CD4-positive, alpha-beta memory T cell (primary cell): ENCODE measurements at regions of chr1 and their contacts with region 1.

Region 1: GRCh38 chr1:26417111-26417759 is 6.6 kb downstream of the LIN28A start:
- DNase-seq: peak; percentile 76 to 81 (median 78)
- H3K4me3 ChIP-seq: no peak overlapping the region
- H3K4me3 Mint-ChIP-seq: no peak overlapping the region
- H3K27ac ChIP-seq: no peak overlapping the region
- H3K27ac Mint-ChIP-seq: no peak overlapping the region
- H3K4me1 ChIP-seq: no peaks in the 10 kb centered on the region
- H3K4me1 Mint-ChIP-seq: peaks cover 0 to 3% (median 0%) of the 10 kb centered on the region in 4 donors
- H3K27me3 ChIP-seq: peaks cover 19% of the 10 kb centered on the region
- H3K27me3 Mint-ChIP-seq: peaks cover 12 to 23% of the 10 kb centered on the region in 2 donors

Region 2: DNA sequence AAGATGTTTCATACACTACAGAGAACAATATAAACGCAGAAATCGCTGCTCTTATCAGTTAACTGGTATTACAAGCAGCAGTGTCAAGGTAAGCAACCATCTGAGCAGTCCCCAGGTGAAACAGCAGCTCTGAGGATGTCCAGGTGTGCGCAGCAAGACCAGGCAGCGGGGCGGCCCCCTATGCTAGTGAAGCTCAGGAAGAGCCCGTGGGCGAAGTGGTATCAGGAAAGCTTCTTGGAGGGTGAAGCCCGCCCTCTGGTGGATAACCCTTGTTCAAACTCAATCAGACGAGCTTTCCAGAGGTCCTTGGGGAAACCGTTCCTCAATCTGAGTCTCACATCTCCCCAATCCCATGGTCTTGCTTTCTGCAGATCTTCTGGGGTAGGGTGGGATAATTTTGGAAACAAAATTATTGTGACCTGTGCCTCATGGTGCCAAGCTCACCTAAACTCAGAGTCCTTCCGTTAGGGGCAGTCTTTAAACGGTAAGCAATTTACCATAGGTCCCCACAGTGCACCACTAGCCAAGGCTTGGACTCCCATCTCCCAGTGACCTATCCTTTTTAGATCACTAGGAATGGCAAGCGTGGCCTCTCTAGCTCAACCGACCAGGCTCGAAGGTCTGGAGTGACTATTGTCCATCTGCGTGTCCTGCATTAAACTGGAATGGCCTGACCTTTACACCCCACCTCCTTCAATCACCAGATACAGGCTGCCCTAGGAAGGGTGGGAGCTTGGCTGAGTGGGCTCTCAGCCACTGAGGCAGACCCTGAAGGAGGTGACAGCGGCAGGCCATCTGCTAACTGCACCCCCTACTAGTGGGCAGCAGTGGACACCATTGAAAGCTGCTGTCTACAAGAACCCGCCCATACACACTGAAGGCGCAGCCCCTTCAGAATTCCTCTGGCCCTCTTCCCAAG is 271.9 kb before region 1 on chr1:
- CTCF ChIA-PET with region 1: interaction called, 11 read pairs
- POLR2A ChIA-PET with region 1: no interaction called
- intact Hi-C with region 1: no loop called
- DNase-seq: peak; percentile 70 to 76 (median 72)
- H3K4me3 ChIP-seq: no peak overlapping the region
- H3K4me3 Mint-ChIP-seq: peak overlapping the region in 2 of 8 donors; percentile 58 to 66
- H3K27ac ChIP-seq: no peak overlapping the region
- H3K27ac Mint-ChIP-seq: peak overlapping the region in 2 of 7 donors; percentile 22 to 36
- H3K4me1 ChIP-seq: peaks cover 8% of the 10 kb centered on the region
- H3K4me1 Mint-ChIP-seq: peaks cover 4 to 7% (median 5%) of the 10 kb centered on the region in 4 donors
- H3K27me3 ChIP-seq: no peaks in the 10 kb centered on the region
- H3K27me3 Mint-ChIP-seq: peaks cover 6 to 8% of the 10 kb centered on the region in 2 donors

Region 3: DNA sequence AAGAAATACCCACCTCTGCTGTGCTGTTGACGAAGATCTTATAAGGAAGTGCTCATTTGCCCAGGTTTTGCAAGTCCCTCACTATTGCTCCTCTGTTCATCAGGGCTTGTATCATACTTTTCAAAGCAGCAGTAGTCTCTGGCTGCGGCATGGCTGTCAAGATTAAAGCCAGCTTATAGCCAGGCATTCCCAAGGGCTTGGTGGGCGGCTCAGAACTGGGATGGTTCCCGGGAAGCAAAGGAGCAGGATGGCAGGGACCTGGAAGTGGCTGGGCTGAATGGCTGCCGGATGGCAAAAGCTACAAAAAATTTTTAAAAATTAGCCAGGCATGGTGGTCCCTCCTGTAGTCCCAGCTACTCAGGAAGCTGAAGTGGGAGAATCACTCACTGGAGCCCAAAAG is 154.0 kb before region 1 on chr1:
- CTCF ChIA-PET with region 1: interaction called, 13 read pairs
- POLR2A ChIA-PET with region 1: no interaction called
- intact Hi-C with region 1: no loop called
- DNase-seq: no peak
- H3K4me3 ChIP-seq: no peak overlapping the region
- H3K4me3 Mint-ChIP-seq: no peak overlapping the region
- H3K27ac ChIP-seq: no peak overlapping the region
- H3K27ac Mint-ChIP-seq: peak overlapping the region in 3 of 7 donors; percentile 36 to 65 (median 50)
- H3K4me1 ChIP-seq: no peaks in the 10 kb centered on the region
- H3K4me1 Mint-ChIP-seq: peaks cover 0 to 3% (median 0%) of the 10 kb centered on the region in 4 donors
- H3K27me3 ChIP-seq: no peaks in the 10 kb centered on the region
- H3K27me3 Mint-ChIP-seq: no peaks in the 10 kb centered on the region

Region 4: GRCh38 chr1:26321315-26322041 is 95.8 kb before region 1 on chr1:
- CTCF ChIA-PET with region 1: interaction called, 33 read pairs
- POLR2A ChIA-PET with region 1: interaction called, 9 read pairs
- intact Hi-C with region 1: no loop called
- DNase-seq: peak; percentile 88 to 95 (median 91)
- H3K4me3 ChIP-seq: peak overlapping the region in 1 of 2 donors; percentile 94
- H3K4me3 Mint-ChIP-seq: peak overlapping the region; percentile 91 to 100 (median 96)
- H3K27ac ChIP-seq: peak overlapping the region; percentile 69
- H3K27ac Mint-ChIP-seq: peak overlapping the region; percentile 83 to 99 (median 95)
- H3K4me1 ChIP-seq: peaks cover 48% of the 10 kb centered on the region
- H3K4me1 Mint-ChIP-seq: peaks cover 30 to 64% (median 47%) of the 10 kb centered on the region in 4 donors
- H3K27me3 ChIP-seq: no peaks in the 10 kb centered on the region
- H3K27me3 Mint-ChIP-seq: no peaks in the 10 kb centered on the region

Region 5: DNA sequence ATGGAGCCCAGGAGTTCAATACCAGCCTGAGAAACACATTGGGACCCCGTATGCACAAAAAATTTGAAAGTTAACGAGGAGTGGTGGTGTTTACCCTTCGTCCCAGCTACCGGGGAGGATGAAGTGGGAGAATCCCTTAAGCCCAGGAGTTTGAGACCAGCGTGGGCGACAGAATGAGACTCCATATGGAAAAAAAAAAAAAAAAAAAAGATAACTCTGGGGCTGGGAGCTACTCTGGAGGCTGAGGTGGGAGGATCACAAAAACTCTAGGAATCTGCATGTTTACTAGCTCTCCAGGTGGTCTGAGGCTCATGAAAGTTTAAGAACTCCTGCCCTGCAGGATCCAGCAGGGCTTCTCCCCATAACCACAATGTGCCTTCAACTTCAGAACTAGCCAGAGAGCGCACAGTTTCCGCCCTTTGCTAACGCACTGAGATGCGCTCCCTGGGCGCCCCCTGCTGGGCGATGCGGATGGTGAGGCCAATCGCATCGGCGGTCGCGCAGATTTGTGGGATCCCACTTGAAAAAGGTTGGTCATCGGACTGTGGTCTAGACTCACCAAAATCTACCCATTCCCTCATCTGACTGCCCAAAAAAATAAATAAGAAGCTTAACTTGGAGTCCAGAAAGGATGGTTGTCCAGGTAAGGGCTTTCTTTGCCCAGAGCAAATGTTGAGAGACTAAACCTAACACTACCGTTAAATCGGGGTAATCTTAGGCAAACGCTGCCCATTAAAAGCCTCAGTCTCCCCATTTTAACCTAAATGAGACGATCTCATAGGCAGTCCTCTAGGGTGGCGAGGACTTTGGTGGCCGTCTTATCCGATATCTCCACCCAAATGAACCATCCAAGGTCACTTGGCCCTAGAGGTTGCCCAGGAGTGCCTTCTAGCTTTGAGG is 53.4 kb before region 1 on chr1:
- CTCF ChIA-PET with region 1: interaction called, 57 read pairs
- POLR2A ChIA-PET with region 1: no interaction called
- intact Hi-C with region 1: loop called (anchors 1 kb)
- DNase-seq: peak; percentile 78 to 84 (median 79)
- H3K4me3 ChIP-seq: no peak overlapping the region
- H3K4me3 Mint-ChIP-seq: peak overlapping the region in 6 of 8 donors; percentile 54 to 82 (median 64)
- H3K27ac ChIP-seq: no peak overlapping the region
- H3K27ac Mint-ChIP-seq: peak overlapping the region in 6 of 7 donors; percentile 27 to 88 (median 70)
- H3K4me1 ChIP-seq: peaks cover 70% of the 10 kb centered on the region
- H3K4me1 Mint-ChIP-seq: peaks cover 31 to 81% (median 52%) of the 10 kb centered on the region in 4 donors
- H3K27me3 ChIP-seq: no peaks in the 10 kb centered on the region
- H3K27me3 Mint-ChIP-seq: no peaks in the 10 kb centered on the region

Region 6: DNA sequence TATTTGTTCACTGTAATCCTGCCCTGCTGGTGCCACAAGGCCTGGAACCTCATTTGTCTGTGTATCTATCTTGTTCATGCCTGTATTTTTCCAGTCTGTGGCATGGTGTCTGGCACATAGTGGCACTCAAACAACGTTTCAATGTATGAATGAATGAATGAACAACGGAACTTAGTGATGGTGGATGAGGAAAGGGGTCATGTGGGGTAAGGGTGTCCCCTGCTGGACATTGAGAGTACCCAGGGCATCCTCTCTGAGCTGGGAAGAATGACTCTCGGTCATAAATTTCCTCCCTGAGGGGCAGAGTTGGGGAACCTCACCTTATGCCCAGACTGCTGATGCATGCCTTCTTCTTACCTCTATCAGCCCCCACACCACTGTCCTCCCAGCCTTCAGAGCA is 25.8 kb before region 1 on chr1:
- CTCF ChIA-PET with region 1: interaction called, 35 read pairs
- POLR2A ChIA-PET with region 1: no interaction called
- intact Hi-C with region 1: no loop called
- DNase-seq: peak; percentile 52 to 63 (median 56)
- H3K4me3 ChIP-seq: no peak overlapping the region
- H3K4me3 Mint-ChIP-seq: peak overlapping the region in 2 of 8 donors; percentile 1 to 43
- H3K27ac ChIP-seq: no peak overlapping the region
- H3K27ac Mint-ChIP-seq: peak overlapping the region in 3 of 7 donors; percentile 51 to 75 (median 59)
- H3K4me1 ChIP-seq: peaks cover 42% of the 10 kb centered on the region
- H3K4me1 Mint-ChIP-seq: peaks cover 24 to 40% (median 28%) of the 10 kb centered on the region in 4 donors
- H3K27me3 ChIP-seq: no peaks in the 10 kb centered on the region
- H3K27me3 Mint-ChIP-seq: no peaks in the 10 kb centered on the region

Region 7: GRCh38 chr1:26597629-26598039 is 180.4 kb after region 1 on chr1:
- CTCF ChIA-PET with region 1: no interaction called
- POLR2A ChIA-PET with region 1: no interaction called
- intact Hi-C with region 1: no loop called
- DNase-seq: peak in 4 of 5 donors; percentile 52 to 62 (median 56)
- H3K4me3 ChIP-seq: no peak overlapping the region
- H3K4me3 Mint-ChIP-seq: no peak overlapping the region
- H3K27ac ChIP-seq: no peak overlapping the region
- H3K27ac Mint-ChIP-seq: no peak overlapping the region
- H3K4me1 ChIP-seq: peaks cover 10% of the 10 kb centered on the region
- H3K4me1 Mint-ChIP-seq: peaks cover 7 to 10% (median 8%) of the 10 kb centered on the region in 4 donors
- H3K27me3 ChIP-seq: no peaks in the 10 kb centered on the region
- H3K27me3 Mint-ChIP-seq: no peaks in the 10 kb centered on the region